ENCODE measurements at regions of chr20 and their contacts with region 1.

Region 1: DNA sequence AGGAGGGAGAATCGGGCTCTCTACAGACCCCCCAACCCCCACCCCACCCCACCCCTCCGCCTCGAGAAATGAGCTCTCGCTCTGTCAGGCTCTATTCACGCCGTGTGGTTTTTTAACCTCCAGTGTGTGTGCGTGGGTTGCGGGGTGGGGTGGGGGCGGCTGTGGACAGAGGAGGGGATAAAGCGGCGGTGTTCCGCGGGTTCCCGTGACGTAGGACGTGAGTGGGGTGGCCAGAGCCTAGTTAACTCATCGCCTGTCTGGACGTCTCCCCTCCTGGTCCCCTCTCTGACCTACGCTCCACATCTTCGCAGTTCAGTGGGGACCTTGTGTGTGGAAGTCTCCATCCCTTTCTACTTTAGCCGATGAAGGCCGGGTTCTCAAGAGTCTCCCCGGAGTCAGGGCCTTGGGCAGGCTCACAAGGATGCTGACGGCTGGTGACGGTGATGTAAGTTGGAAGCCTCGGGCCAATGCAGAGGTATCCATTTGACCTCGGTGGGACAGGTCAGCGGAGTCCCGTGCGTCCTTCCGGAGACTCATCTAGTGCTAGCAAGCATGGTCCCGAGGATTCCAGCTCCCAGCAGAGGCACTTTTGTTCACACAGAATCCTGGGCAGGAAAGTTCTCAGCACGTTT is 1507.1 kb upstream of the DEFB115 start:
- DNase-seq: no peak
- ATAC-seq: no peak
- H3K4me3 ChIP-seq: no peak overlapping the region
- H3K4me3 Mint-ChIP-seq: no peak overlapping the region
- H3K27ac ChIP-seq: no peak overlapping the region
- H3K27ac Mint-ChIP-seq: no peak overlapping the region
- H3K4me1 ChIP-seq: no peaks in the 10 kb centered on the region
- H3K4me1 Mint-ChIP-seq: peaks cover 16% of the 10 kb centered on the region
- H3K27me3 ChIP-seq: no peaks in the 10 kb centered on the region
- H3K27me3 Mint-ChIP-seq: no peaks in the 10 kb centered on the region
- CTCF ChIP-seq: no peak

Region 2: DNA sequence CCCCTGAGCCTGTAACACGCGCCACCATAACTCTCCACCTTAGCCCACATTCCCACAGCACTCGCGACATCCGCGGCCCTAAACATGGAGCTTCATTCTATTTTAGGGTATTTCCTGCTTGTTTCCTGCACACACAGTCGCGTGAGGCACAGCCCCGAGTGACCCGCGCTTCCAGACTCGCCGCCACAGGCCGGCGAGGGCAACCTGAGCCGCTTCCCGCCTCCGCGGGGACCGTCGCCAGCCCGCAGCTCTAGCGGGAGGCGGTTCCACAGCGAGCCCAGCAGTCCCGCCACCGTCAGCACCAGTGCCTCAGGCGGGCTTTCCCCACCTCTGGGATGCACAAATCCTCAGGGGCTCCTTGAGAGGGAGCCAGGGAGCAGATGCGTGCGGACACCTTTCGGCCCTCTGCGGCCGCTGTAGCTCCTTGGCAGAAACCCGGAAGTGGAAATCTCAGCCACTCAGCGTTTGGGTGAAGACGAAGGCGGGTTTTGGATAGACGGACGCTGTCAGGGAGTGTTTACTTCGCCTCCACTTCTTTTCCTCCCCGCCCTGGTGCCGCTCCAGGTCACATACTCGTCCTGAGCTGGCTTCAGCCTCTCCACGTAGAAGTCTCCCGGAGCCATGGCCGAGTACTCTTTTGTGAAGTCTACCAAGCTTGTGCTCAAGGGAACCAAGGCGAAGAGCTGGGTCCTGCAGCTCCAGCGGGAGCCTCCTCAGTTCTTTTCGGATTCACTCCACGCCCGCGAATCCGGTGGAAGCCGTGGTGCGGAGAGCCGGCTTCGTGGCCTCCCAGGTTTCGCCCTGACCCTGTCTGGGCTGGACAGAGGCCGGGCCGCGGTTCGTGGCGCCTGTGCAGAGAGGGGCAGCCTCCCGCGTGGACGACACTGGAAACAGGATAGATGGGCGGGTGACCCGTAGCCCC is 670.4 kb before region 1 on chr20:
- CTCF ChIA-PET with region 1: no interaction called
- POLR2A ChIA-PET with region 1: no interaction called
- intact Hi-C with region 1: no loop called
- DNase-seq: peak in 4 of 9 experiments; percentile 5 to 52 (median 30)
- ATAC-seq: peak; percentile 31
- H3K4me3 ChIP-seq: peak overlapping the region in 1 of 2 experiments; percentile 37
- H3K4me3 Mint-ChIP-seq: peak overlapping the region; percentile 73
- H3K27ac ChIP-seq: no peak overlapping the region
- H3K27ac Mint-ChIP-seq: no peak overlapping the region
- H3K4me1 ChIP-seq: no peaks in the 10 kb centered on the region
- H3K4me1 Mint-ChIP-seq: no peaks in the 10 kb centered on the region
- H3K27me3 ChIP-seq: no peaks in the 10 kb centered on the region
- H3K27me3 Mint-ChIP-seq: no peaks in the 10 kb centered on the region
- CTCF ChIP-seq: no peak

Region 3: DNA sequence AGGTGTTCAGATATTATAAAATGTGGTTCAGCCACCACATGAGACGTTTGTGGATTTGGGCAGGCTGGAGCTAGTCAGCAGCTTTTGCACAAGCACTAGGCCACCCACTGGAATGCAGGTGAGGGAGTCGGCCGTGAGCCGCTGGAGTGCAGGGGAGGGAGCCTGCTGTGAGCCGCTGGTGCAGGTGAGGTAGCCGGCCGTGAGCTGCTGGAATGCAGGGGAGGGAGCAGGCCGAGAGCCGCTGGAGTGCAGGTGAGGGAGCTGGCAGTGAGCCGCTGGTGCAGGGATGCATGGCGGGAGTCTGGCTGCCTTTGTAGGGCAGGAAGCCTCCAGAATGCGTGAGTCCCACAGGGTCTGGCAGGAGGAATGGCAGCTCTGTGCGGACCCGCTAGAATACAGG is 400.5 kb before region 1 on chr20:
- CTCF ChIA-PET with region 1: no interaction called
- POLR2A ChIA-PET with region 1: no interaction called
- intact Hi-C with region 1: no loop called
- DNase-seq: no peak
- ATAC-seq: no peak
- H3K4me3 ChIP-seq: no peak overlapping the region
- H3K4me3 Mint-ChIP-seq: no peak overlapping the region
- H3K27ac ChIP-seq: no peak overlapping the region
- H3K27ac Mint-ChIP-seq: no peak overlapping the region
- H3K4me1 ChIP-seq: no peaks in the 10 kb centered on the region
- H3K4me1 Mint-ChIP-seq: no peaks in the 10 kb centered on the region
- H3K27me3 ChIP-seq: no peaks in the 10 kb centered on the region
- H3K27me3 Mint-ChIP-seq: no peaks in the 10 kb centered on the region
- CTCF ChIP-seq: no peak

Region 4: DNA sequence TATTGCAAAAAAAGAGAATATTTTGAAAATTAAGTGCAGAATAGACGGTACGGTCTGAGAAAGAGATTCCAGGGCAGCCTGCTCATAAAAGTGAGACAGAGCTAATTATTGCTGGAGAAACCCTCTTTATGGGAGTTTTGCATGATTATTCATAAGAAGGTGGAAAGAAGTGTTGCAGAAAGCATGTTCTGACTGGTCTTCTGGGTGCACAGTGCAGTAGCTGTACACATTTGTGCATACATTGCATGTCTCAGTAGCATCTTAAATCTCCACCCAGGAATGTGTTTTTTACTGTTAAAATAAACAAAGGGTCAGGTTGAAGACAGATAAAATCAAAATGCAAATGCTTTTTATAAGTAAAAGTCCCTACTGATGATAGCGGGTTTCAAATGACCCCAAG is 306.6 kb before region 1 on chr20:
- CTCF ChIA-PET with region 1: no interaction called
- POLR2A ChIA-PET with region 1: no interaction called
- intact Hi-C with region 1: no loop called
- DNase-seq: no peak
- ATAC-seq: no peak
- H3K4me3 ChIP-seq: no peak overlapping the region
- H3K4me3 Mint-ChIP-seq: no peak overlapping the region
- H3K27ac ChIP-seq: no peak overlapping the region
- H3K27ac Mint-ChIP-seq: no peak overlapping the region
- H3K4me1 ChIP-seq: peaks cover 3% of the 10 kb centered on the region
- H3K4me1 Mint-ChIP-seq: no peaks in the 10 kb centered on the region
- H3K27me3 ChIP-seq: no peaks in the 10 kb centered on the region
- H3K27me3 Mint-ChIP-seq: no peaks in the 10 kb centered on the region
- CTCF ChIP-seq: no peak

Region 5: DNA sequence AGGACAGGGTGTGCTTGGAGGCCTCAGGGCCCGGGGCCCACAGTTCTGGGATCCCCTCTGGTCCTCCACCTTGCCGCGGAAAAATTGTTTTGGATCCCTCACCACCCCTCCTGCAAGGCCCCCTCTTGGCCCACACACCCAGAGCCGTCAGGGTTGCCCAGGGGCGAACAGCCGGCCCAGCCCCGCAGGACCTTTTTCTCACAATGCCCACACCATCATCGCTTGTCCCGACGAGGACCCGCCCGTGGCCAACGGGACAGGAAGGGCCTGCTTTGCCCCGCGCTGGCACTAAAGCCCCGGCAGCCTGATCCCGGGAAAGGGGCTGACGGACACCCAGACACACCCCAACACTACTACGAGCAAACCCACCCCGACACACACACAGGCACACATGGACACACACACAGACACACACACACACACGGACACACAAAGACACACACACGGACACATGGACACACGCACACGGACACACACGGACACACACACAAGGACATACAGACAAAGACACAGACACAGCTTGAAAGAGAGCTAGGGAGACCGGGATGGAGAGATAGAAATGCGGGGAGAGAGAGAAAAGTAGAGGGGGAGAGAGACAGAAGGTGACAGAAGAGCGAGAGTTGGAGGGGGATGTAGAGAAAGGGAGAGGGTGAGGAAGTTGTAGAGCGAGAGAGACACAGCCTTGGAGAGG is 13.6 kb after region 1 on chr20:
- CTCF ChIA-PET with region 1: no interaction called
- POLR2A ChIA-PET with region 1: no interaction called
- intact Hi-C with region 1: loop called in 1 of 2 experiments (anchors 1 kb)
- DNase-seq: no peak
- ATAC-seq: no peak
- H3K4me3 ChIP-seq: no peak overlapping the region
- H3K4me3 Mint-ChIP-seq: no peak overlapping the region
- H3K27ac ChIP-seq: no peak overlapping the region
- H3K27ac Mint-ChIP-seq: no peak overlapping the region
- H3K4me1 ChIP-seq: no peaks in the 10 kb centered on the region
- H3K4me1 Mint-ChIP-seq: peaks cover 6% of the 10 kb centered on the region
- H3K27me3 ChIP-seq: no peaks in the 10 kb centered on the region
- H3K27me3 Mint-ChIP-seq: peaks cover 8% of the 10 kb centered on the region
- CTCF ChIP-seq: no peak

Region 6: GRCh38 chr20:31496761-31497295 is 1746.4 kb after region 1 on chr20:
- CTCF ChIA-PET with region 1: no interaction called
- POLR2A ChIA-PET with region 1: no interaction called
- intact Hi-C with region 1: loop called in 1 of 2 experiments (anchors 5 kb)
- DNase-seq: no peak
- ATAC-seq: no peak
- H3K4me3 ChIP-seq: no peak overlapping the region
- H3K4me3 Mint-ChIP-seq: no peak overlapping the region
- H3K27ac ChIP-seq: no peak overlapping the region
- H3K27ac Mint-ChIP-seq: no peak overlapping the region
- H3K4me1 ChIP-seq: no peaks in the 10 kb centered on the region
- H3K4me1 Mint-ChIP-seq: no peaks in the 10 kb centered on the region
- H3K27me3 ChIP-seq: no peaks in the 10 kb centered on the region
- H3K27me3 Mint-ChIP-seq: peaks cover 26% of the 10 kb centered on the region
- CTCF ChIP-seq: no peak